A673 (cell line): ENCODE measurements at regions of chr14 and their contacts with region 1.

Region 1: DNA sequence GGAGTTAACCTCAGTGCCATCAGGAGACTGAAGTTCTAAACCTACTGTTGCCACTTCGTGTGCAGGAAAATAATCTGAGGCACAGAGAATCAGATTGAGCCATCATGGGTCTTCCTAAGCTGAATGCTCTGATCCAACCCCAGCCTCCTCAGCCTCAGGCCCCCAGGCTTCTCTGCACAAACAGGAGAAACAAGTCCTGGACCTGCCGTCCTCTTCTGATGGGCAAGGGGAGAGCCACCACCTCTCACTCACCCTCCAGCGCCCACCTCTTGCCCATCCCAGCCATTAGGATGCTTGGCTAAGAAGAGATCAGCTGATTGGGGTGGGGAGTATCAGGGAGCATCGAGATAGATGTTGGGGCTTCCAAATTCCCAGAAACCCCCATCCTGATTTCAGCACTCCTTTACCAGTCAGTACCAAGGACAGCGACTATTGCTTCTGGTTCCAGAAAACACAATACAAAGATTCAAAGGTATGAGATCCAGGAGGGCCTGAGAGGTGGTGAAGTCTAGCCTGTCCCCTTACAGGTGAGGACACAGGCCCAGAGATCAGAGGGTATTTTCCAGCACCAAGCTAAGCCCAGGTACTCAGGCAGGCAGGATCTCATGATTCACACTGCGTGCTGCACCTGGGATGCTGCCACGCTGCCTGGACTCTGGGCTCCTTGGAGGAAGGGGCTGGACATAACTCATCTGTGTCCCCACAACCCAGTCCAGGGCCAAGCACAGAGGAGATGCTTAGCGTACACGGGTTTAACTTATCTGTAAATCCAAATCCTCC is 76.5 kb downstream of the TUNAR start:
- DNase-seq: peak; percentile 23
- H3K4me3 ChIP-seq: no peak overlapping the region
- H3K27ac ChIP-seq: no peak overlapping the region
- H3K4me1 ChIP-seq: peaks cover 2% of the 10 kb centered on the region
- H3K27me3 ChIP-seq: peaks cover 6% of the 10 kb centered on the region
- CTCF ChIP-seq: no peak

Region 2: GRCh38 chr14:95146079-95146771 is 806.9 kb before region 1 on chr14:
- CTCF ChIA-PET with region 1: no interaction called
- POLR2A ChIA-PET with region 1: no interaction called
- intact Hi-C with region 1: no loop called
- DNase-seq: no peak
- H3K4me3 ChIP-seq: no peak overlapping the region
- H3K27ac ChIP-seq: no peak overlapping the region
- H3K4me1 ChIP-seq: peaks cover 40% of the 10 kb centered on the region
- H3K27me3 ChIP-seq: no peaks in the 10 kb centered on the region
- CTCF ChIP-seq: no peak

Region 3: DNA sequence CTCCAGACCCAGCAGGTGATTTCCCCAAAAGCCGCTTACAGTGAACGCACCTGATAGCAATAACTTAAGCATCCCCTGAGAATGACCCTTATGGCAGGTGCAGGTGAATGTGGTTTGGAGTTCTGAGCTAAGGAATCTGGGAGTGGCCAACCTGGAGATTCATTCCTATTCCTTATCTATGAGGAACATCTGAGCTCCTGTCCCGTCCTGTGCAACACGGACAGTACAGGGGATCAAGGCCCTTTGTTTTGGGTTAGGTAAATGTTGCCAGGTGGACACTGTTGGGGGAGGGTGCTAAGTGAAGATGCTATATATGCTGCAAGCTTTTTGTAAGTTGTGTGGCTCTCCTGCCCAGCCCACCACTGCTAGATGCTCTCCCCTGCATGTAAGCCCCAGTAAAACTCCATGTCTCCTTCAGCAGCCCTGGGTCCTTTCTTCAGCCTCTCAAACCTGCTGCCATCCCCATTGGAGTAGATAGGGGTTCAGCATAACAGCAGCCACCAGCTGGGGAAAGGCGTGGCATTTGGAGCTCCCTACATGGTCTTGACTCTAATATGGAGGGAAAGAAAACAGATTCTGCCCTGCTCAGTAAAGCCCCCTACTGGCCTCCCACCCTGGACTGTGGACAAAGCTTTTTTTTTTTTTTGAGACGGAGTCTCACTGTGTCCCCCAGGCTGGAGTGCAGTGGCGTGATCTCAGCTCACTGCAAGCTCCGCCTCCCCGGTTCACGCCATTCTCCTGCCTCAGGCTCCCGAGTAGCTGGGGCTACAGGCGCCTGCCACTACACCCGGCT is 287.8 kb before region 1 on chr14:
- CTCF ChIA-PET with region 1: no interaction called
- POLR2A ChIA-PET with region 1: no interaction called
- intact Hi-C with region 1: no loop called
- DNase-seq: peak; percentile 42
- H3K4me3 ChIP-seq: no peak overlapping the region
- H3K27ac ChIP-seq: no peak overlapping the region
- H3K4me1 ChIP-seq: peaks cover 43% of the 10 kb centered on the region
- H3K27me3 ChIP-seq: no peaks in the 10 kb centered on the region
- CTCF ChIP-seq: peak; percentile 37

Region 4: DNA sequence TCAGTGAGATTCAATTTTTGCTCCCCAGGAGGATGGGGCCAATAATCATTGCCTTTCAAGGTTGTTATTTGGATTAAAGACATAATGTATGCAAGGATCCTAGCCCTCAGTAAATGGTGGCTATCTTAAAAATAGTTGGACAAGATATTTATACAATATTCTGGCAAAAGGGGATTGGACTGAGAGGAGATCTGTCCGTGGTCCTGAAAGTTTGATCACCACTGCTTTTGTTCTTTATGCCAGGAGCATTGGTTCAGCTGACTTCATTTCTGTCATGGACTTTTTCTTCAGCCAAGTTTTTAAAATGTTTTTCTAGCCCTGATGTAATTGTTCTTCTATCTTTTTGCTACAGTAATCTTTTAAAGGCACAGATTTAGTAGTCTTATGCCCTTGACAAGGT is 169.0 kb before region 1 on chr14:
- CTCF ChIA-PET with region 1: no interaction called
- POLR2A ChIA-PET with region 1: no interaction called
- intact Hi-C with region 1: loop called (anchors 10 kb)
- DNase-seq: peak; percentile 49
- H3K4me3 ChIP-seq: no peak overlapping the region
- H3K27ac ChIP-seq: no peak overlapping the region
- H3K4me1 ChIP-seq: no peaks in the 10 kb centered on the region
- H3K27me3 ChIP-seq: peaks cover 53% of the 10 kb centered on the region
- CTCF ChIP-seq: no peak